Vagina (tissue), 2 donors: ENCODE measurements at regions of chr20 and their contacts with region 1.

Region 1: GRCh38 chr20:32484958-32485769 is 100.0 kb downstream of the NOL4L start:
- DNase-seq: no peak
- H3K4me3 ChIP-seq: peak overlapping the region; percentile 66 to 85
- H3K27ac ChIP-seq: peak overlapping the region; percentile 88
- H3K4me1 ChIP-seq: peaks cover 32% of the 10 kb centered on the region
- H3K27me3 ChIP-seq: no peaks in the 10 kb centered on the region
- CTCF ChIP-seq: peak; percentile 41 to 78 (median 56)
- POLR2A ChIP-seq: no peak

Region 2: DNA sequence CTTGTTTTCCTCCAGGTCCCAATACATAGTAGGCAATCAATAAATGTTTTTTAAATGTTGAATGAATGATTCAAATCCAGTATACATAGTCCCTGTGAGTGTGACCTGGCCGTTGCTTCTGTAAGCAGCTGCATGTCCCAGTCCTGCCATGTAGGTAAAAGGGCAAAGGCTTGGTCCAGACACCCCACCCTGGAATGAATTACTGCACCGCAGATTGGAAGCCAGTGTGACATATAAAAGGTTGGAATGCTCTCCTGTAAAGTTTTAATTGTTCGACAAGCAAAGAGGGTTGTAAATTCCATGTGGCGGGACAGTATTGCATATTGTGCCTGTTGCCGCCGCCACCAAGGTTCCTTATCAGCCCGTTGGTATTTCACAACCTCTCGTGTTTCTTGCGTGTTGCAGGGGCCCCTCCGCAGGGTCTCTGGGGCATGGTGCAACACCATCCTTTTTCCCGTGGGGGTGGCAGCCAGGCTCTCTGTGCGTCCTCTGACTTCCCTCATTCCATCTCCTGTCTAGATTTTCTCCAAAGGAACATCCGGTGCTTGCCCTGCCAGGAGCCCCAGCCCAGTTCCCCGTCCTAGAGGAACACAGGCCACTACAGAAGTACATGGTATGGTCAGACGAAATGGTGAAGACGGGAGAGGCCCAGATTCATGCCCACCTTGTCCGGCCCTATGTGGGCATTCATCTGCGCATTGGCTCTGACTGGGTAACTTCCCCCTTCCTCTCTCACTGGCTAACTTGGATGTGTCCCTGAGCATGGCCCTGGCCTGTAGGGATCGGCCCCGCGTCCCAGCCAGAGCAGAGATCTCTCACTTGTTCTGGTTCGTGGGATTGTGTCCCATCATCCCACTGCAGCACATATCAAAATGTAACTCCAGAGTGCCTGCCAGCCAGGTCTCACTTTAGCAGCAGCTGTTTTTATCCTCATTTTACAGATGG is 257.1 kb before region 1 on chr20:
- intact Hi-C with region 1: no loop called
- DNase-seq: no peak
- H3K4me3 ChIP-seq: no peak overlapping the region
- H3K27ac ChIP-seq: no peak overlapping the region
- H3K4me1 ChIP-seq: peaks cover 25% of the 10 kb centered on the region
- H3K27me3 ChIP-seq: no peaks in the 10 kb centered on the region
- CTCF ChIP-seq: no peak
- POLR2A ChIP-seq: no peak

Region 3: DNA sequence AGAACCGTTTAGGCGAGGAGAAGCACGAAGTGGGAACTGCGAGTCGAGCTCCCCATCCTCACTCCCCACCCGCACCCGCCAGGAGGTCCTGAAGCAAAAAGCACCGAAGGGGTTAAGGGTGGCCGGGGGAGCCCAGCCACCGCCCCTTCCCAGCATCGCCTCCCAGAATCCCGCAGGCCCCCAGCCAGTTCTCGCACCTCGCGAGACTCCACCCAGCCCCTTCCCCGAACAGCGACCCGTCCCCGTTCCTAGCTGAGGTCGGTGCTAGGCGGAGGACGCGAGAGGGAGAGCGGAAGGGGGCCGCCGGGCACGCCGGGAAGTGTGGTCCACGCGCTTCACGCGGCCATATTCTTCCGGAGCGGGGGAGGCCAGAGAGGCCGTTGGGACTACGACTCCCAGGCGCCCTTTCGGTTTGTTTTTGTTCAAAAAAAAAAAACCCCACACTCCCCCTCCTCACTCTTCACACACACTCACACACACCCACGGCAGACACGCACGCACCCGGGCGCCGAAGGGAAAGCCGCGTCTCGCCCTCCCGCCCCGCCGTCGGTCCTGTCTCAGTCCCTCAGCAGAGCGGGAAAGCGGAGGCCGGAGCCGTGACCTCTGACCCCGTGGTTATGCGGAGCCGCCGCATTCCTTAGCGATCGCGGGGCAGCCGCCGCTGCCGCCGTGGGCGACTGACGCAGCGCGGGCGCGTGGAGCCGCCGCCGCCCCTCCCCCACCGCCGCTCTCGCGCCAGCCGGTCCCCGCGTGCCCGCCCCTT is 127.1 kb before region 1 on chr20 and contains the start of gene ASXL1:
- intact Hi-C with region 1: loop called (anchors 5 kb)
- DNase-seq: peak in 1 of 2 donors; percentile 96
- H3K4me3 ChIP-seq: peak within 1 kb of the TSS; percentile 67 to 85
- H3K27ac ChIP-seq: peak within 1 kb of the TSS; percentile 96
- H3K4me1 ChIP-seq: peaks cover 51% of the 10 kb centered on the region
- H3K27me3 ChIP-seq: no peaks in the 10 kb centered on the region
- CTCF ChIP-seq: no peak
- POLR2A ChIP-seq: peak in 1 of 2 donors; percentile 58
- total RNA-seq, gene ASXL1: 97.5 TPM